ENCODE measurements at regions of chr6 and their contacts with region 1.

Region 1: GRCh38 chr6:152117156-152118133 is 310.0 kb downstream of the ESR1 start:
- DNase-seq: no peak
- ATAC-seq: no peak
- H3K4me3 ChIP-seq: no peak overlapping the region
- H3K4me3 Mint-ChIP-seq: no peak overlapping the region
- H3K27ac ChIP-seq: no peak overlapping the region
- H3K27ac Mint-ChIP-seq: peak overlapping the region; percentile 66
- H3K4me1 ChIP-seq: no peaks in the 10 kb centered on the region
- H3K4me1 Mint-ChIP-seq: peaks cover 6% of the 10 kb centered on the region
- H3K27me3 ChIP-seq: no peaks in the 10 kb centered on the region
- H3K27me3 Mint-ChIP-seq: no peaks in the 10 kb centered on the region
- CTCF ChIP-seq: no peak

Region 2: GRCh38 chr6:150981095-150981494 is 1136.3 kb before region 1 on chr6:
- CTCF ChIA-PET with region 1: no interaction called
- POLR2A ChIA-PET with region 1: no interaction called
- intact Hi-C with region 1: no loop called
- DNase-seq: peak in 1 of 9 experiments; percentile 30
- ATAC-seq: no peak
- H3K4me3 ChIP-seq: no peak overlapping the region
- H3K4me3 Mint-ChIP-seq: no peak overlapping the region
- H3K27ac ChIP-seq: no peak overlapping the region
- H3K27ac Mint-ChIP-seq: no peak overlapping the region
- H3K4me1 ChIP-seq: no peaks in the 10 kb centered on the region
- H3K4me1 Mint-ChIP-seq: no peaks in the 10 kb centered on the region
- H3K27me3 ChIP-seq: no peaks in the 10 kb centered on the region
- H3K27me3 Mint-ChIP-seq: no peaks in the 10 kb centered on the region
- CTCF ChIP-seq: no peak

Region 3: GRCh38 chr6:151765444-151765886 is 352.0 kb before region 1 on chr6:
- CTCF ChIA-PET with region 1: interaction called, 3 read pairs
- POLR2A ChIA-PET with region 1: no interaction called
- intact Hi-C with region 1: loop called (anchors 10 kb)
- DNase-seq: peak in 5 of 9 experiments; percentile 3 to 63 (median 16)
- ATAC-seq: peak; percentile 51
- H3K4me3 ChIP-seq: no peak overlapping the region
- H3K4me3 Mint-ChIP-seq: no peak overlapping the region
- H3K27ac ChIP-seq: no peak overlapping the region
- H3K27ac Mint-ChIP-seq: no peak overlapping the region
- H3K4me1 ChIP-seq: no peaks in the 10 kb centered on the region
- H3K4me1 Mint-ChIP-seq: peaks cover 5% of the 10 kb centered on the region
- H3K27me3 ChIP-seq: no peaks in the 10 kb centered on the region
- H3K27me3 Mint-ChIP-seq: peaks cover 6% of the 10 kb centered on the region
- CTCF ChIP-seq: peak; percentile 59

Measured in CD8-positive, alpha-beta T cell (primary cell).